B cell (primary cell): ENCODE measurements at regions of chr20 and their contacts with region 1.

Region 1: DNA sequence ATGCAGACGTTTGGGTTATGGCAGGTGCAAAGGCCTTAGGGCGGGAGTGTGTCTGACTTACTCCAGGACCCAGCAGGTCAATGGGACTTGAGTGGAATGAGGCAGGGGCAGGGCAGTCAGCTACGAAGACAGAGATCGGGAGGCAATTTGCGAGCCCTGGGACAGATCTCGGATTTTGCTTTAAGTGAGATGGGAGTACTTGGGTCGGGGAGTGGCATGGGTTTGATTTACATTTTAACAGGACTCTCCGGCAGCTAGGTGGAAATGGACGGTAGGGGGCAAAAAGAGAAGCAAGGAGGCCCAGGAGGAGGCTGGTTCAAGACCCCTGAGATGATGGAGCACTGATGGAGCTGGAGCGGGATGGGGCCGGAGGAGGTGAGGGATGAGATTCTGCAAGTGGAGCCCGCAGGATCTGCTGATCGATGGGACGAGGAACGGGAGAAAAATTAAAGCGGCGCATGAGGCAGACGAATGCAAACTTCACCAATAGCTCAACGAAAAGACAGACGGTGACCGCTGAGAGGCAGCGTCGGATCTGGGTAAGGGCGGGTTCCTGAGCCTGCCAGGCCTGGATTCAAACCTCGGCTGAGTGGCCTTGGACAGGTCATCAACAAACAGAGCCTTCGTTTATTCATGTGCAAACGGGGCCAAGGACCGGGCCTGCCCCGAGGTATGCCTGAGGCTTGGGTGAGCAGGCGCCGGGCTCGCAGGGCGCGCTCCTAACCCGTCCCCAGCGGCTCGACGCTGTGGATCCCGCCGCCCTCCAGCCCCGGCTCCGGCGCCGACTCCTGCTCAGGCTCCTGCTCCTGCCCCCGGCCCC is 756 bp upstream of the RBCK1 start:
- DNase-seq: peak; percentile 81
- ATAC-seq: peak; percentile 69
- H3K4me3 ChIP-seq: peak overlapping the region; percentile 28 to 99 (median 96)
- H3K4me3 Mint-ChIP-seq: peak overlapping the region; percentile 92
- H3K27ac ChIP-seq: peak overlapping the region; percentile 18 to 64
- H3K27ac Mint-ChIP-seq: peak overlapping the region; percentile 96
- H3K4me1 ChIP-seq: peaks cover 30 to 33% of the 10 kb centered on the region in 2 donors
- H3K4me1 Mint-ChIP-seq: peaks cover 42% of the 10 kb centered on the region
- H3K27me3 ChIP-seq: no peaks in the 10 kb centered on the region
- H3K27me3 Mint-ChIP-seq: no peaks in the 10 kb centered on the region
- CTCF ChIP-seq: peak; percentile 64

Region 2: DNA sequence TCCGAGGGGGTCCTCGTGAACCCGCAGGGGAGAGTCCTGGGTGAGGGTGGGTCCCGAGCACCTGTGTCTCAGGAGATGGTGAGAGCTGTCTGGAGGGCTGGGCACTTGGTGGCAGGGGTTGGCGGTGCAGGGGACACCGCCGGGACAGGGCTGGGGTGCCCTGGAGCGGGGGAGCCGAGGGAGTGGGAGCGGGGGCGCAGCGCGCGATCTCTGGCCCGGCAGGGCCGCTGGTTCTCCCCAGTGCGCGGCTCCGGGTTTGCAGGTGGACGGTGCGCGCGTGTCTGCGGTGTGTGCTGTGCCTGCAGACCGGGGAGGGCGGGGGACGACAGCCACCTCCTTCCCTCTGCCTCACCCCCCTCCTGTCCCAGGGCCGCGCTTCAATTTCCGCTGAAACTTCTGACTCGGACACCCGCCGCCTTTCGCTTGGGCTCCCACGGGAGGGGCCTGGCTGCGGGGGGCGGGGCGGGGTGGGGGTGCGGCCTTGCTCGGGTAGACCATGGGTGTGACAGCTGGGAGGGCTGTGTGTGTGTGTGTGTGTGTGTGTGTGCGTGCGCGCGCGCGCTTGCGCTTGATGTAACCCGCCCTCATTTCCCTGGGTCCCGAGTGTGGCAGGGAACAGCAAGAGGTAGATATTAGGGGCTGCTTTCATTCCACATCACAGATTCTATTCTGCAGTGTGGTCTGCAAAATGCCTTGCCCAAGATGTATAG is 25.6 kb before region 1 on chr20:
- CTCF ChIA-PET with region 1: interaction called, 6 read pairs
- POLR2A ChIA-PET with region 1: interaction called, 6 read pairs
- intact Hi-C with region 1: loop called (anchors 1 kb)
- DNase-seq: peak; percentile 85
- ATAC-seq: peak; percentile 78
- H3K4me3 ChIP-seq: peak overlapping the region; percentile 3 to 79 (median 74)
- H3K4me3 Mint-ChIP-seq: peak overlapping the region; percentile 83
- H3K27ac ChIP-seq: peak overlapping the region; percentile 41 to 83
- H3K27ac Mint-ChIP-seq: peak overlapping the region; percentile 87
- H3K4me1 ChIP-seq: peaks cover 9% of the 10 kb centered on the region in 2 donors
- H3K4me1 Mint-ChIP-seq: peaks cover 19% of the 10 kb centered on the region
- H3K27me3 ChIP-seq: no peaks in the 10 kb centered on the region
- H3K27me3 Mint-ChIP-seq: no peaks in the 10 kb centered on the region
- CTCF ChIP-seq: no peak

Region 3: GRCh38 chr20:396619-397431 is 10.5 kb before region 1 on chr20:
- CTCF ChIA-PET with region 1: no interaction called
- POLR2A ChIA-PET with region 1: no interaction called
- intact Hi-C with region 1: no loop called
- DNase-seq: no peak
- ATAC-seq: no peak
- H3K4me3 ChIP-seq: no peak overlapping the region
- H3K4me3 Mint-ChIP-seq: no peak overlapping the region
- H3K27ac ChIP-seq: no peak overlapping the region
- H3K27ac Mint-ChIP-seq: no peak overlapping the region
- H3K4me1 ChIP-seq: peaks cover 2 to 3% of the 10 kb centered on the region in 2 donors
- H3K4me1 Mint-ChIP-seq: peaks cover 2% of the 10 kb centered on the region
- H3K27me3 ChIP-seq: no peaks in the 10 kb centered on the region
- H3K27me3 Mint-ChIP-seq: no peaks in the 10 kb centered on the region
- CTCF ChIP-seq: no peak

Region 4: DNA sequence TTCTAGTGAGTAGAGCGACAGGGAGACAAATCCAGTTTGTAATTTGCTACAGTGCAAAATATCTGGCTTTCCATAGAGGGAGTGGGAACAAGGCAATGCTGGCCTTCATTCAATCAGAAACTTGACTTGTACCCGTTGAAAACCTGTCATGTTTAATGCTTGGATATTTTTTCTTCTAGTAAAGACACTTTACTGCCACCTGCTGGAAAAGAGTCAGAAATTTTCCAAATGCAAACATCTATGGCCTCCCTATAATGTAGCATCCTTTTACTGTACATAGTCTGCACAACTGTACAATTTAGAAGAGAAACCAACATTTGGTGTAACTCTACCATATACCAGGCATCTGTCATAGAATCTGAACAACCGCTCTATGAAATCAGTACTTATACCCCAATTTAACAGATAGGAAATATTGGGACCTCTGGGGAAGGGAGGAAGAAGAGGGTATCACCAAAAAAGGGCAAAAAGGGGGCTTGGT is 71.6 kb after region 1 on chr20:
- CTCF ChIA-PET with region 1: interaction called, 14 read pairs
- POLR2A ChIA-PET with region 1: no interaction called
- intact Hi-C with region 1: loop called (anchors 1 kb)
- DNase-seq: peak; percentile 79
- ATAC-seq: peak; percentile 64
- H3K4me3 ChIP-seq: no peak overlapping the region
- H3K4me3 Mint-ChIP-seq: no peak overlapping the region
- H3K27ac ChIP-seq: no peak overlapping the region
- H3K27ac Mint-ChIP-seq: peak overlapping the region; percentile 50
- H3K4me1 ChIP-seq: no peaks in the 10 kb centered on the region
- H3K4me1 Mint-ChIP-seq: peaks cover 2% of the 10 kb centered on the region
- H3K27me3 ChIP-seq: no peaks in the 10 kb centered on the region
- H3K27me3 Mint-ChIP-seq: no peaks in the 10 kb centered on the region
- CTCF ChIP-seq: peak; percentile 85